Ascending aorta (tissue), 2 donors: ENCODE measurements at regions of chr3 and their contacts with region 1.

Region 1: DNA sequence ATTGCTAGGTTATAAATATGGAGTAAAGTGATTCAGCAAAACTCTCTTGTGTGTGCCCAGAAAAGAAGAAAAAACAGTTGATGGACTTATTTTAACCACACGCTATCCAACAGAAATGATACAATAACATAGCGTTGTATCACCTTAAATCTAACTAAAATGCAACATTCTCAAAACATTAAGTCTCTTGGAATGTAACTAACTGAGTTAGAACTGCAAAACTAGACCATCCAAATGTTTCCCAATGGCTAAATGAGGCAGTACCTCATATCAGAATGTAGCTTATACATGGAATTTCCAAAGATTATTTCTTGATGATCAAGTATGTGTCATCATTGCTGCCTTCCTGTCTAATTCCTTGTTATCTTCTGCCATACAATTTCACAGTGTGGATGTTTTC is 187.9 kb downstream of the CNTN3 start:
- DNase-seq: no peak
- H3K4me3 ChIP-seq: no peak overlapping the region
- H3K27ac ChIP-seq: peak overlapping the region; percentile 55 to 67
- H3K4me1 ChIP-seq: peaks cover 0 to 8% of the 10 kb centered on the region in 2 donors
- H3K27me3 ChIP-seq: no peaks in the 10 kb centered on the region
- CTCF ChIP-seq: no peak

Region 2: GRCh38 chr3:74532446-74532845 is 105.9 kb after region 1 on chr3:
- intact Hi-C with region 1: loop called (anchors 5 kb)
- DNase-seq: peak in 1 of 2 donors; percentile 75
- H3K4me3 ChIP-seq: no peak overlapping the region
- H3K27ac ChIP-seq: peak overlapping the region; percentile 4 to 34
- H3K4me1 ChIP-seq: peaks cover 1 to 8% of the 10 kb centered on the region in 2 donors
- H3K27me3 ChIP-seq: no peaks in the 10 kb centered on the region
- CTCF ChIP-seq: no peak

Region 3: GRCh38 chr3:74614107-74614967 is 187.8 kb after region 1 on chr3 and contains the start of gene CNTN3:
- intact Hi-C with region 1: loop called (anchors 5 kb)
- DNase-seq: peak in 1 of 2 donors; percentile 66
- H3K4me3 ChIP-seq: peak within 1 kb of the TSS; percentile 50 to 78
- H3K27ac ChIP-seq: peak within 1 kb of the TSS in 1 of 2 donors; percentile 74
- H3K4me1 ChIP-seq: no peaks in the 10 kb centered on the region
- H3K27me3 ChIP-seq: no peaks in the 10 kb centered on the region
- CTCF ChIP-seq: no peak
- total RNA-seq, gene CNTN3: 0.11 TPM

Region 4: GRCh38 chr3:74630602-74631001 is 204.0 kb after region 1 on chr3:
- intact Hi-C with region 1: no loop called
- DNase-seq: no peak
- H3K4me3 ChIP-seq: no peak overlapping the region
- H3K27ac ChIP-seq: no peak overlapping the region
- H3K4me1 ChIP-seq: no peaks in the 10 kb centered on the region
- H3K27me3 ChIP-seq: no peaks in the 10 kb centered on the region
- CTCF ChIP-seq: peak; percentile 36 to 69 (median 40)